PC-9 (cell line): ENCODE measurements at regions of chr20 and their contacts with region 1.

Region 1: DNA sequence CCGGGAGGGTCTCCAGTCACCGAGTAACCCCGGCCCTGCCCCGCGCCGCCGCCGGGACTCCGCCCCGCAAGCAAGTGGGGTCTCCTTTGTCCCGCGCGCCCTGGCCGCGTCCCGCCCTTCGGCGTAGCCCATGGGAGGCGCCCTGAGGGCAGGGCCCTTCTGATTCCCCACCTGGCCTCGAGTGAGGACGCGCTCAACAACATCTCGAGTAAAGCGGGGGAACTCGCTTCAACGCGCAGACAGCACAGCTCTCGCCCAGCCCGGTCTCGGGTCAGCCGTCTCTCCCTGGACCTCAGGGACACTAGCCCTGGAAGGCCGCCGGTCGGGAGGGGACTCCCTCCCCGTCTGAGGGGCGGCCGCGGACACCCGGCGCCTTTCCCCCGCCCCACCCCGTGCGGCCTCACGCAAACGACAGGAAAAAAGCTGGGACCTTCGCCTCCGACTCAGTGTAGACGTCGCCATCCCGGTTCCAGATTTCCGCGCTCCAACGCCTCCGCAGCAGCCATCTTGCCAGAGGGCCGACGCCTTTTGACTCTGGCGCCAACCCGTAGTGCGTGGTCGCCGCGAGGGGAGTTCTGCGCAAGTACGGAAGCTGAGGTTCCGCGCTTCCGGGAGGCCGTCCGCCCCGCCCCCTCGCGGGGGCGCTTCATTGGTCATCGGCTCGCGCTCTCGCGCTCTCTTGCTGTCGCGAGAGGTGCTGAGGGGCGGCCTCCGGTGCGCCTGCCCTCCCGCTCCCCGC is 412 bp upstream of the GID8 start:
- DNase-seq: peak; percentile 87 to 98
- H3K4me3 ChIP-seq: peak overlapping the region; percentile 99
- H3K27ac ChIP-seq: peak overlapping the region; percentile 67
- H3K4me1 ChIP-seq: peaks cover 19% of the 10 kb centered on the region
- H3K27me3 ChIP-seq: no peaks in the 10 kb centered on the region
- CTCF ChIP-seq: no peak

Region 2: DNA sequence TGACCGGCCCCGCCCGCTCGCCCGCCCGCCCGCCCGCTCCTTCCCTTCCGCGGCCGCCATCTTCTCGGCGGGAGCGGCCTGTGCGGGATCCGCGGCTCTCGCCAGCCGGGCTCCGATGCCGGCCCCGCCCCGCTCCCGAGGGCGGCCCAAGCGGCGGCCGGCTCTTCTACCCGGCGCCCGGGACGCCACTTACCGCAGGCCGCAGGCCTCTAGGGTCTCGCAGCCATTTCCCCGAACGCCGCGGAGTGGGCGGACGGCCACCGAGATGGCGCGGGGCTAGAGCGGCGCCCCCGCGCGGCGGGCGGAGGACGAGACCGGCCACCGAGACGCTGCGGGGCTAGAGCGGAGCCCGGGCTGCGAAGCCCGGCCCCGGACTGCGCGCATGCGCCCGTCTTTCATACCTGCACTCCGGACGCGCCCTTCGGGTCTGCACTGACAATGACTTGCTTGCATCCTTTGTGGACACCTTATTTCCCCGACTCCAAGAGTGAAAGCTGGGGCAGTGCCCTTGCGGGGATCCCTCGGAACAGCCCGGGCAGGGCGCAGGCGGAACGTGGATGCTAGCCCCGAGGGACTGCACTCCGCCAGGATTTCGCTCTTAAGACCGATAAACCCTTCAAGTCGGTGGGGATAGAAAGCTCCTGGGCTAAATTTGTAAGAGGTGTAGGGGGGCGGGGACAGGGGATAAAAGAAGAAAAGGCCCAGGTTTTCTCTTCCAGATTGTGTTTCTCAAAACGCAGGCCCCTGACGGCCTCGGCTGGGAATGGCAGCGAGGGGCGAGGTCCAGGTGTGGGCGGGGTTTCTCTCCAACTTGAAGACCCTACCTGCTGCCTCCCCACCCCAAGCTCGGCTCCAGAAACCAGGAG is 11.1 kb before region 1 on chr20 and contains the start of gene DIDO1:
- CTCF ChIA-PET with region 1: interaction called, 3 read pairs
- POLR2A ChIA-PET with region 1: no interaction called
- intact Hi-C with region 1: loop called (anchors 1 kb)
- DNase-seq: peak; percentile 73 to 91
- H3K4me3 ChIP-seq: peak within 1 kb of the TSS; percentile 75
- H3K27ac ChIP-seq: peak within 1 kb of the TSS; percentile 81
- H3K4me1 ChIP-seq: peaks cover 35% of the 10 kb centered on the region
- H3K27me3 ChIP-seq: no peaks in the 10 kb centered on the region
- CTCF ChIP-seq: peak; percentile 71; the same call in 1 of the 2 replicates
- total RNA-seq, gene DIDO1: 56.4 and 61.4 TPM in 2 replicates